Right ventricle myocardium inferior (tissue), 1 donor: ENCODE measurements at regions of chr5 and their contacts with region 1.

Region 1: GRCh38 chr5:56270568-56271392 is 37.6 kb upstream of the ANKRD55 start:
- DNase-seq: peak; percentile 85
- ATAC-seq: peak; percentile 99

Region 2: DNA sequence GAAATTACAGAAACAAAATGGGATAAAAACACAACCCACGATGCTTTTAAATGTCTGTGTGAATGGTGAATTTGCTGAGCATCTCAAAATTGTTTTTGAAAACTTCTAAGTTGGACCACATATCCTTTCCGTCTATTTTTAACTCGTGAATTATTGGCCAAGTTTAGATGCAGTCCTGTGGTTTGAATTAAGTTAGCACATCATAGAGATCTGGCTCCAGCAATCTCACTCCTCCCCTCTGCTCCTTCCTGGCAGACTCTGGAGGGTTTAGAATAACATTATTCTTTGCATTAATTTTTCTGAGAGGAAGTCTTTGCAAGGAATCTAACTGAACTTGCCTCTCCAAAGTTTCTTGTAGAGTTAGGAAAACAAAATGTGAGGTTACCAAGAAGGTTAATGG is 23.2 kb before region 1 on chr5:
- intact Hi-C with region 1: no loop called
- DNase-seq: no peak
- ATAC-seq: no peak

Region 3: DNA sequence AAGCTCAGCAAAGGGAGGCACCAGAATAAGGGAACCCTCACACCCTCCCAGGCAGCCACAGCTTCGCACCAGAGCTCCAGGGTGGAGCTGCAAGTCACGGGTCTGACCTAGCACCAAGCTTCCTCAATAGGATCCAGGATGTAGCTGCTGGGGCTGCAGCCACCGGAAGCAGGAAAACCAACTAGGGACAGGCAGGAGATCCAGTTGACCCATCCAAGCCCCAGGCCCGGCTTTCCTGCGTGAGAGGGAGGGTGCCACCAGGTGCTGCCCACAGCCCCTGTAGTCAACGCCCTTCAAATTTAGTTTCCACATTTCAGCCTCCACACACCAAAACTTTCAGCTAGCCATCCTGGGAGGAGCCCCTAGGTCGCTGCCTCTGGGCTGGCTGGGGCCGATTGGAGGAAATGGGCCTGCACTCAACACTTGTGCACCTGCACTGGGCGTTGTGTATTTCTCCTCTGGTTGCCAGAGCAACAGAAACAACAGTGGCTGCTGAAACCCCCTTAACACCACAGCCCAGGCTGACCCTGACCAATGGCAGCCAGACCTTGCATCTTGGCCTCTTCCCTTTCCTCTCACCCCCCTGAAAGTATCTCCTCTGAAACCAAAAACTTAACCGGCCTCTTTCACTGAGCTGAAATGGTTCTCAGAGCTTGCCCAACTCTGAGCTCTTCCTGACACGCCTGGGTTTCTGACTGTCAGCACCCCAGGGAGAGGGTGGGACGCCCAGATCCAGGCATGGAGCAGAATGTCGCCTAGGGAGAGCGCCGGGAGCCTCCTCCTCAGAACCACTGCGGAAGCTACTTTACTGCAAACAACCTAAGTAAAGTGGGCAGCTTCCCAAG is 318.1 kb after region 1 on chr5:
- intact Hi-C with region 1: loop called (anchors 5 kb)
- DNase-seq: peak; percentile 76
- ATAC-seq: peak; percentile 73

Region 4: GRCh38 chr5:56615361-56616153 is 344.8 kb after region 1 on chr5:
- intact Hi-C with region 1: loop called (anchors 5 kb)
- DNase-seq: no peak
- ATAC-seq: peak; percentile 72

Region 5: DNA sequence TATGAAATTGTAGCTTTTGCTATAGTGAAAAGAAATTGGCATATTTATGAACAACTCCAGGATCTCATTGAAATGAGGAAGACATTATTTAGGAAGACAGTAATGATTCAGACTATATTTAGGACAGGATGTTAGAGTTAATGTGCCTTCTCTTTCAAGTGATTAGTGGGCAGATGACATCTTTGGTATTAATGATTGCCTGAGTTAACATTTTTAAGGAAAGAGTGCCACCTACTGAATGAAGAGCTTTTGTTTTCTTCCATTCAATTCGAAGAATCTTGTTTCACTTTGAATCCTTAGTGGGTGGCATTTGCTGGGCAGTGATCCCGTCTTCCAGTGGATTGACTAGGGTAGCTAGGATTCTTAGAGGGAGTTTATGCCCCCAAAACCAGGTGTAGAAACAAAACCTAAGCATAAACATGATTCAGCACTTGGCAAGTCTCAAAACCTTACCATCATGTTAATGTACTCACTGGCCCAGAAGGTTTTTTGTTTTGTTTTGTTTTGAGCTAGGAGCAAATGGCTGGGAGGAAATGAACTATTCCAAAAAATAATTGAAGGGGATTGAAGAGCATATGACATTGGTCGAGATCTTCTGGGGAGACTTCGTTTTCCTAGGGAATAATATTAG is 567.7 kb after region 1 on chr5:
- intact Hi-C with region 1: loop called (anchors 1 kb)
- DNase-seq: no peak
- ATAC-seq: peak; percentile 55